ENCODE measurements at regions of chr7 and their contacts with region 1.

Region 1: DNA sequence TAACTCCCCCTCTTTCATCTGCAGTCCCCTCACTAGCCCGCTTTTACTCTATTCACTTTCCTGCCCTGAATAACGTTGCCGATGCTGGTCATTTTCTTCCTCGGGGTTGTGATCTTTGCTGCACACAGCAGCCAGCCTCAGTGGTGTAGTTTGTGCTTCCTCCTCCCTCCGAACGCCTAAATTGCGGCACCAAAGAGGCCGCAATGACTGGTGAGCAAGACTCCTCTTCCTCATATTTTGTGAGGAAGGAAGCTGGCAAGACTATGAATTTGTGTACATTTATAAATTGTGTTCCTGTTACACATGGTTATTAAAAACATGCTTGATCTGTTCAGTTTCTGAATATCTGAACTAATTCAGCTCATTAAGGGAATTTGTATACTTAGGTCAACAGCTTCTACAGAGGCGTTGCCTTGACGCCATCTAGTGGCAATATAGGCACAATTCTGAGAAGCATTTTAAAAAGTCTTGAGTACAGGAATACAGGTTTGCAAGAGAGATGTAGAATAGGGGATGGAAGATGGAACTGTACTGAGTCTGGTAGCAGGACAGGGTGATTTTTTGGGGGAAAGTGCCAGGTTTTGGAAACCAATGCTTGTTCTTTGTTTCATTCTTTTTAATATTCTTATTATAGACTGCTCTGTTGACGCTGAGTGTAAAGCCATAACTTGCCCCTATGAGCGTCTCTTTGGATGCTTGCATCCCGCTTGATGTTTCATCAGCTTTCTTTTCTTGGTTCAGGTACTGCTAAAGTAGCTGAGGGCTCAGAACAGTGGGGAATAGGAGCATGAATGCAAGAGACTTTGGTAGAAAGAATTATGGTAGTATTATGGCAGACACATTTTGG is 4.1 kb upstream of the TAS2R5 start:
- DNase-seq: peak; percentile 33
- H3K4me3 Mint-ChIP-seq: no peak overlapping the region
- H3K27ac Mint-ChIP-seq: no peak overlapping the region
- H3K4me1 Mint-ChIP-seq: no peaks in the 10 kb centered on the region
- H3K27me3 Mint-ChIP-seq: no peaks in the 10 kb centered on the region

Region 2: DNA sequence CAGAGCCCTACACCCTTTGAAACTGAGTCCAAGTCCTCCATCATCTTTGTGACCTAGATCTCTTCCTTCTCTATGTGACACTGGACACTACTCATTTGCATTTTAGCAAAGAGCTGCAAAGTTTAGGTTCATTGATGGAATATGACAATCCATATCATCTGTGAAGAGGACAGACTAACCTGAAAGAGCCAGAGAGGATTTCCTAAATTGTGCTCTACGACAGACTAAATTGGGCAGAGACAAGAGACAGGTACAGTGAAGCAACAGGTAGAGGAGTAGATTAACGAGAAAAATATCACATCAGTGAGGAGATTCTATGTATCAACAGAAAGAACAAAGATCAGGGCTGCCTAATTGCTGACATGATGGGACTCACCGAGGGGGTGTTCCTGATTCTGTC is 22.1 kb before region 1 on chr7 and contains the start of gene TAS2R3:
- CTCF ChIA-PET with region 1: interaction called, 12 read pairs
- intact Hi-C with region 1: no loop called
- DNase-seq: no peak
- H3K4me3 Mint-ChIP-seq: no peak within 1 kb of the TSS
- H3K27ac Mint-ChIP-seq: no peak within 1 kb of the TSS
- H3K4me1 Mint-ChIP-seq: no peaks in the 10 kb centered on the region
- H3K27me3 Mint-ChIP-seq: no peaks in the 10 kb centered on the region
- total RNA-seq, gene TAS2R3: 0.69 to 0.96 TPM